GM18951 (cell line): ENCODE measurements at regions of chr15 and their contacts with region 1.

Region 1: GRCh38 chr15:99704444-99704838 is 28.8 kb downstream of the LYSMD4 start:
- POLR2A ChIP-seq: no peak

Region 2: DNA sequence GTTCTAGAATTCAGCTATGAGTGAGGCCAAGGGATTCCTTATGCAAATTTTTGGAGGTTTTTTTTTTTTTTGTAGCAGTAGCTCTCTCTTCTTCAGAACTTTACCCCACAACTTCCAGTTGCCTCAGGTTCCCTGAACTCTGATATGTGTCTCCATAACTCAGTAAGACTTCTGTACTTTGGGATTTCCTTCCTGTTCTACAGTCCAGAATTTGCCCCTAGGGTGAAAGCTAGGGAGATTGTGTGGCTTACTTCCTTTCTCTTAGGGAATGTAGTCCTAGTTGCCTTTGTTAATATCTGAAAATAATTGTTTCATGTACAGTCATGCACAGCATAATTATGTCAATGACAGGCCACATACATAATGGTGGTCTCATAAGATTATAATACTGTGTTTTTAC is 422.3 kb before region 1 on chr15:
- in situ Hi-C with region 1: loop called (anchors 10 kb)
- POLR2A ChIP-seq: no peak

Region 3: GRCh38 chr15:99433034-99433756 is 271.2 kb before region 1 on chr15:
- in situ Hi-C with region 1: no loop called
- POLR2A ChIP-seq: no peak